Naive thymus-derived CD4-positive, alpha-beta T cell (primary cell): ENCODE measurements at regions of chr20 and their contacts with region 1.

Region 1: DNA sequence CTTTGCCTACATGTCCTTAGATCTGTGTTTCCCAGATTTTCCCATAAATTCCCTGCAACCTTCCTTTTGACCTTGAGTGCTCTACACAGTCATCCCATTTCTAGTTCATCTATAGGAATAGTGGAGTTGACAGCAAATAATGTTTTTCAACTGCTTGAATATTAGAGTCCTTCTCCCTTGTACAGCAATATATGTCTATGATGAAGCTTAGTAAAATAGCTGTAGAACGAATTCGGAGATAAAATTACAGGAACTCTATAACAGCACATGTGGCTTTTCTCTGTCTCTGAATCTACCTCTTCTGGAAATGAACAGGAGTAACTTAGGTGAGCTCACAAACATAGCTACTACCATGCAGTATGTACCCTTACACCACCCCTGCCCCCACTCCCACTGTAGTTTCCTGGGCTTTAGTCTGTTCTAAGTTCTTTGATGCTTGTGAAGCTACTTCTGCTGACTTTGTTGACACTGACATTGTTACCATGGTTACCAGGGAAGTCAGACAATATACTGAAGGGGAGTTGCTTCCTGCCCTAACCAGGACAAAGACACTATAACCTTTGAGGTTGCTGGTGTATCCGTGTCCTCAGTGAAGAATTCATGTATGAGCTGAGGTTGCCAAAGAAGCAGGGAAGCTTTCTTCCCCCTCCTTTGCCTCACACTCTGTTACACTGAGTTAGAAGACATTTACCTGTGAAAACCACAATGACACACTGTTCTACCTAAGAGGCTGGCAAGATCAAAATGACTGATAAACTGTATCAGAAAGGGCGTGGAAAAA is 35.8 kb upstream of the SHLD1 start:
- DNase-seq: peak; percentile 28 to 98 (median 96)
- ATAC-seq: peak; percentile 94
- H3K4me3 ChIP-seq: peak overlapping the region; percentile 3
- H3K4me3 Mint-ChIP-seq: peak overlapping the region; percentile 52 to 81 (median 72)
- H3K27ac ChIP-seq: peak overlapping the region; percentile 87
- H3K27ac Mint-ChIP-seq: peak overlapping the region; percentile 81 to 100 (median 95)
- H3K4me1 ChIP-seq: peaks cover 21 to 28% of the 10 kb centered on the region in 2 donors
- H3K4me1 Mint-ChIP-seq: peaks cover 15 to 59% (median 51%) of the 10 kb centered on the region in 7 donors
- H3K27me3 ChIP-seq: no peaks in the 10 kb centered on the region
- H3K27me3 Mint-ChIP-seq: peaks cover 0 to 4% (median 0%) of the 10 kb centered on the region in 5 donors

Region 2: DNA sequence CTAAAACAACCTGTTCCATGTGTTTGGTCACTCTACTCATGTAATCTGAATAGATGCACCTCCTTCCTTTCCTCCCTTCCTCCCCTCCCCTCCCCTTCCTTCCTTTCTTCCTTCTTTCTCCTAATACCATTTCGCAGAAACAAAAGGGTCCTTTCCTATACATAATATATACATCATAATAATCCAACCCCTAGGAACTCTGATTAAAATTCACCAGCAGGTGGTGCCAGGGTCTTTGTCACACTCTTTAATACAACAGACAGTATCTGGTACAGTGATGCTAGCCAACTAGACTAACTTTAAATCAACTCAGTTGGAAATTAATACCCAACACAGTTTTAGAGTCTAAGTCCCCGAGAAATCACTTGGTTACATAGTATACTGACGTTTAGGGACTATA is 145.4 kb before region 1 on chr20:
- CTCF ChIA-PET with region 1: interaction called, 3 read pairs
- POLR2A ChIA-PET with region 1: no interaction called
- intact Hi-C with region 1: loop called in 1 of 2 experiments (anchors 1 kb)
- DNase-seq: peak in 7 of 9 donors; percentile 56 to 75 (median 67)
- ATAC-seq: peak; percentile 77
- H3K4me3 ChIP-seq: no peak overlapping the region
- H3K4me3 Mint-ChIP-seq: peak overlapping the region in 8 of 10 donors; percentile 22 to 83 (median 49)
- H3K27ac ChIP-seq: peak overlapping the region; percentile 58
- H3K27ac Mint-ChIP-seq: peak overlapping the region; percentile 6 to 96 (median 90)
- H3K4me1 ChIP-seq: peaks cover 0 to 17% of the 10 kb centered on the region in 2 donors
- H3K4me1 Mint-ChIP-seq: peaks cover 20 to 59% (median 36%) of the 10 kb centered on the region in 7 donors
- H3K27me3 ChIP-seq: no peaks in the 10 kb centered on the region
- H3K27me3 Mint-ChIP-seq: no peaks in the 10 kb centered on the region

Region 3: DNA sequence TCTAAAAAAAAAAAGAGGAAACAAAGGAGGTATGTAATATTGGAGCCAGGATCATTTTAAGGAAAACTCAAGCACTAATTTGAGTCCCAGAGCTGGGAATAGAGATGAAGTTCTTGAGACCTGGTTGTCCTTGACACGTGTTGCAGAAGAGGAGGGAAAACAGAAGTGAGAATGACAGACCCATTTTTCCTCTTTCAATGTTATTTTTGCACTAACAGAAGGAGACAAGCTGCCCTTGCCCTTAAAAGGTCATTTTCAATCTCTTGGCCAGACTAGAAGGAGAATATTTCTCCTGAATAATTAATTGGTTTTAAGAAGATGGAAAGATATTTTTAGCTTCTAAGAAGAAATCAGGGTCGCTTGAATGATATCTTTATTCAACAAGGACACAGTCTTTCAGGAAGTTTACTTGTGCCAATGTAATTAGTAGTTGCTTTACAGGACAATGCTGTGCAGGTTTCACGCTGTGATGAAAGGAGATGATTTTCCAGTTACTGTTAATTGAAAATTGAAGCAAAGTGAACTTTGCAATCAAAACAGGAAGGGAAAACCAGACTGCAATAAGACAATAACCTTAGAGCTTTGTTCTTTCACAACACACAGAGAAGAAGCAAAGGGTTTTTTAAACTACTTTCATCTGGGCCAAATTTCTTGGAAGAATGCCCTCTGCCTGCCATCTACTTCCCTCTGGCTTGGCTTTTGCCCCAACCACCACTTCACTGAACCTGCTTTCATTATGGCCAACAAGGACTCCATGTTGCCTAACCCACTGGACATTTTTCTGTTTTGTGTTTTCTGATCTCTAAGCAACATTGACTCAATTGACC is 72.1 kb before region 1 on chr20:
- CTCF ChIA-PET with region 1: interaction called, 4 read pairs
- POLR2A ChIA-PET with region 1: interaction called, 9 read pairs
- intact Hi-C with region 1: loop called in 1 of 2 experiments (anchors 1 kb)
- DNase-seq: no peak
- ATAC-seq: peak; percentile 41
- H3K4me3 ChIP-seq: no peak overlapping the region
- H3K4me3 Mint-ChIP-seq: peak overlapping the region in 7 of 10 donors; percentile 2 to 47 (median 25)
- H3K27ac ChIP-seq: no peak overlapping the region
- H3K27ac Mint-ChIP-seq: peak overlapping the region in 8 of 9 donors; percentile 45 to 86 (median 72)
- H3K4me1 ChIP-seq: peaks cover 0 to 22% of the 10 kb centered on the region in 2 donors
- H3K4me1 Mint-ChIP-seq: peaks cover 27 to 43% (median 40%) of the 10 kb centered on the region in 7 donors
- H3K27me3 ChIP-seq: no peaks in the 10 kb centered on the region
- H3K27me3 Mint-ChIP-seq: no peaks in the 10 kb centered on the region

Region 4: DNA sequence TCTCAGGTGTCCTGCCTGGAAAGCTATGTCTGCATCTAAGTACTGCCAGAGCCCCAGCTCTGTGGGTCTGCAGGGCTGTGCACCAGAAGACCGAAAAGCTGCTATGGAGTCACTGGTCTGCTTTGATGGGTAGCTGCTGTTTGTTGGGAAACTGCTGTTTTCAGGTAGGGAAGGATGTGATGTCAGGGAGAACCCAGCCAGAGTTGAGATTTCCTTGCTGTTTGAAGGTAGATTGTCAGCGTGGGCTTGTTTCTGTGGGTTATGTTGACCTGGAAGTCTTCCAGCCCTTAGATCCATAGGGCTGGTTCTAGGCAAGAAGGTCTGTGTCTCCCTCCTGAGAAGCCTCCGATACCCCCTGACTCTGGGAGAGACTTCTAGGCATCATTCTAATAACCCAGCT is 23.5 kb after region 1 on chr20:
- CTCF ChIA-PET with region 1: no interaction called
- POLR2A ChIA-PET with region 1: interaction called, 7 read pairs
- intact Hi-C with region 1: loop called in 1 of 2 experiments (anchors 1 kb)
- DNase-seq: peak in 6 of 9 donors; percentile 18 to 40 (median 24)
- ATAC-seq: peak; percentile 20
- H3K4me3 ChIP-seq: no peak overlapping the region
- H3K4me3 Mint-ChIP-seq: peak overlapping the region in 9 of 10 donors; percentile 51 to 84 (median 79)
- H3K27ac ChIP-seq: peak overlapping the region; percentile 64
- H3K27ac Mint-ChIP-seq: peak overlapping the region; percentile 47 to 98 (median 96)
- H3K4me1 ChIP-seq: peaks cover 12 to 22% of the 10 kb centered on the region in 2 donors
- H3K4me1 Mint-ChIP-seq: peaks cover 15 to 43% (median 32%) of the 10 kb centered on the region in 7 donors
- H3K27me3 ChIP-seq: no peaks in the 10 kb centered on the region
- H3K27me3 Mint-ChIP-seq: peaks cover 0 to 4% (median 0%) of the 10 kb centered on the region in 5 donors

Region 5: GRCh38 chr20:5835321-5835821 is 120.9 kb after region 1 on chr20:
- CTCF ChIA-PET with region 1: no interaction called
- POLR2A ChIA-PET with region 1: no interaction called
- intact Hi-C with region 1: loop called in 1 of 2 experiments (anchors 1 kb)
- DNase-seq: peak in 2 of 9 donors; percentile 5 to 34
- ATAC-seq: peak; percentile 54
- H3K4me3 ChIP-seq: no peak overlapping the region
- H3K4me3 Mint-ChIP-seq: peak overlapping the region in 9 of 10 donors; percentile 51 to 89 (median 69)
- H3K27ac ChIP-seq: peak overlapping the region; percentile 77
- H3K27ac Mint-ChIP-seq: peak overlapping the region; percentile 66 to 99 (median 96)
- H3K4me1 ChIP-seq: peaks cover 15 to 17% of the 10 kb centered on the region in 2 donors
- H3K4me1 Mint-ChIP-seq: peaks cover 19 to 55% (median 36%) of the 10 kb centered on the region in 7 donors
- H3K27me3 ChIP-seq: no peaks in the 10 kb centered on the region
- H3K27me3 Mint-ChIP-seq: no peaks in the 10 kb centered on the region